AG04450 (cell line): ENCODE measurements at regions of chr13 and their contacts with region 1.

Region 1: DNA sequence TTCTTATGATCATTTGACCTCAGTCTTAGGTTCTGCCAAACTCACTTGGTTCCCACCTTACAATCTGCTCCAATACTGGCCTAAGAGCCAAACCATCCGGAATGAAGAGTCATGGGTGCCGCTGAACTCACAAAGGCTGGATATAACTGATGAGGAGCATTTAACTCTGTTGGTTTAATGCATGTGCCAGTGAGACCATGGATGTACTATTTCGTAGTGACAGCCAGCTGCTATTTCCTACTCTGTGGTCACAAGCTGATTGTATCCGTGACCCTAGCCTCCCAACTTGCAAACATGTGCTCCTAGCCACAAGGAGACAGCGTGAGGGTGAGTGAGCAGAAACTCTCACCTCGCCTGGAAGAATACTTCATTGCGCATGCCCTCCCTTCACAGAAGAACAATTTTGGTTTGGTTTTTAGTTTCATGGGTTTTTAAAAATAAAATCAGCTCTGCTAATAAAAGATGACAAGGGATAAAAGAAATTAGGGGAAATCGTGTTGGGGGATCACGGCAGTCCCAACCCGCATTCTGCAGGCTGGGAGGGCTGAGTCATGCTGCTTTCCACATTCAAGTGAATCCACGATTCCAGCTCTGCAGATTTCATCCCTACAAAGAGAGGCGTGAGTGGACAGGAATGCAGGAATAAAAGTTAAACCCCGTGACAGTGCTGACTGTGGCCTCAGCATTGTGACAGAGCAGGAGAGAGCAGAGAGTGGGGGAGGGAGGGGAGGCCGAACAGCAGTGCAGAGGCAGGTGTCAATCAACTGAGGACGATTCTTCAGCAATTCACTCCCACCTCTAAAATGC is 66.8 kb upstream of the RAP2A start:
- DNase-seq: peak; percentile 24
- H3K4me3 ChIP-seq: no peak overlapping the region
- H3K27ac ChIP-seq: peak overlapping the region; percentile 54
- H3K27me3 ChIP-seq: no peaks in the 10 kb centered on the region
- CTCF ChIP-seq: no peak

Region 2: GRCh38 chr13:97261254-97262005 is 105.8 kb before region 1 on chr13:
- CTCF ChIA-PET with region 1: no interaction called
- POLR2A ChIA-PET with region 1: no interaction called
- DNase-seq: no peak
- H3K4me3 ChIP-seq: no peak overlapping the region
- H3K27ac ChIP-seq: no peak overlapping the region
- H3K27me3 ChIP-seq: no peaks in the 10 kb centered on the region
- CTCF ChIP-seq: no peak

Region 3: DNA sequence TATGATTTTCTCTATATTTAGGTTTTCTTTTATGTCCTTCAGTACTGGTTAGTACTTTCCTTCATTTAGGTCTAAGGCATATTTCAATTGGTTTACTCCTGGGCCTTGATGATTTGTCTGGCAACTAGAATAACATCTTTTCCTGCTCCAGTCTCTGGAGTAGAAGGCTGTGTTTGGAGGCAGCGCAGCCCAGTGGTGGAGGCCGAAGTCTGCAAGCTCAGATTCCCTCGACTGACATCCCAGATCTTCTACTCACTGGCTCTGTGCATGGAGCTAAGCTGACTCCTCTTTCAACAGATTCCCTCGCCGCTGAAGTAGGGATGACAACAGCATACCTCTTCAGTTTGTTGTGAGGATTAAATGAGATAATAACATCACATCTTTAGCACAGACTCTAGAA is 207.7 kb after region 1 on chr13:
- CTCF ChIA-PET with region 1: interaction called, 13 read pairs
- POLR2A ChIA-PET with region 1: no interaction called
- DNase-seq: peak; percentile 23
- H3K4me3 ChIP-seq: no peak overlapping the region
- H3K27ac ChIP-seq: no peak overlapping the region
- H3K27me3 ChIP-seq: peaks cover 3% of the 10 kb centered on the region
- CTCF ChIP-seq: peak; percentile 73